K562 (cell line): ENCODE measurements at regions of chr6 and their contacts with region 1.

Region 1: GRCh38 chr6:68728159-68728979 is 93.3 kb downstream of the ADGRB3 start:
- DNase-seq: peak in 1 of 4 experiments; percentile 25
- ATAC-seq: no peak
- H3K4me3 ChIP-seq: no peak overlapping the region
- H3K27ac ChIP-seq: no peak overlapping the region
- H3K4me1 ChIP-seq: peaks cover 0 to 20% of the 10 kb centered on the region in 2 experiments; a peak in 3 of 5 replicates
- H3K27me3 ChIP-seq: no peaks in the 10 kb centered on the region
- CTCF ChIP-seq: no peak
- EP300 ChIP-seq: peak; percentile 53
- POLR2A ChIP-seq: no peak
- RAD21 ChIP-seq: no peak

Region 2: GRCh38 chr6:68716620-68717019 is 11.7 kb before region 1 on chr6:
- CTCF ChIA-PET with region 1: no interaction called
- POLR2A ChIA-PET with region 1: interaction called, 16 read pairs
- in situ Hi-C with region 1: no loop called
- intact Hi-C with region 1: no loop called
- DNase-seq: peak in 2 of 4 experiments; percentile 30 to 53
- ATAC-seq: peak; percentile 49
- H3K4me3 ChIP-seq: no peak overlapping the region
- H3K27ac ChIP-seq: peak overlapping the region; percentile 48; the same call in 2 of the 3 replicates
- H3K4me1 ChIP-seq: peaks cover 0 to 30% of the 10 kb centered on the region in 2 experiments; a peak in 3 of 5 replicates
- H3K27me3 ChIP-seq: no peaks in the 10 kb centered on the region
- CTCF ChIP-seq: no peak
- EP300 ChIP-seq: peak; percentile 72
- POLR2A ChIP-seq: no peak
- RAD21 ChIP-seq: no peak